Uterus (tissue), 4 donors: ENCODE measurements at regions of chr6 and their contacts with region 1.

Region 1: DNA sequence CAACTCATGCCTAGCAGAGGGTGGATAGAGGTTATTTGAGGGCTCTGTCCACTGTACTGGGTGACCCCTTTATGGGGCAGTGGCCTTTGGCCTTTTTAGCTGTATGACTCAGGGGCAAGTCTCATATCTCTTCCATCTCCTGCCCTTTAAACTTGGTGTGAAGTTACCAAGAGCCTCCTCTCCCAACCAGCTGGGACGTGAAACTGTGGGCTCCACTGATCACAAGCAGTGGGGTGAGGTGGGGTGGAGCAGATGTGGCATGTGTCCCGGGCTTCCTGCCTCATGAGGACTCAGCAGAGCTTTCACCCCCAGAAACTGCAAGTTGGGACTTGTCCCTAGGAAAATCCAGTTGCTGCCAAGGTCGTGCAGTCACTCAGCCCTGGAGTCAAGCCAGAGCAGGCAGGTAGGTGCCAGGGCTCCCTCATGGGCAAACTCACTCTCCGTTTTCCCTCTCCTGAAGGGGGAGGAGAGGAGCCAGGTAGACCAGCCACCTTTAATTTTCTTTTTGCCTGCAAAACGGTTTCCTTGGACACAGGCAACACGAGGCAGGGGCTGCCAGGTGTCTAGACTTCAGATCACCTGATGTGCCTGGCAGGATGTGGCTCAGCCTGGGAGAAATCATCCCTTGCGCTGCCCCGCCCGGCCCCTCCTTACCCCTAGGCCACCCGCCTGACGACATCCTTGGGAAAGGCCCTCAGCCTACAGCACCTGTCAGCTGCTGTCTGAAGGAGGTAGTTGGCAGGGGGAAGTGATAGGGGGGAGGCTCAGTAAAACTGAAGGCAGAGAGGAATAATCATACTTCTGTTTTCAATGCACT is 4.0 kb downstream of the CDKN1A start:
- DNase-seq: peak in 1 of 2 donors; percentile 34
- H3K4me3 ChIP-seq: no peak overlapping the region
- H3K27ac ChIP-seq: peak overlapping the region; percentile 1 to 28
- H3K4me1 ChIP-seq: peaks cover 0 to 5% of the 10 kb centered on the region in 2 donors
- H3K27me3 ChIP-seq: no peaks in the 10 kb centered on the region
- CTCF ChIP-seq: no peak
- POLR2A ChIP-seq: no peak

Region 2: DNA sequence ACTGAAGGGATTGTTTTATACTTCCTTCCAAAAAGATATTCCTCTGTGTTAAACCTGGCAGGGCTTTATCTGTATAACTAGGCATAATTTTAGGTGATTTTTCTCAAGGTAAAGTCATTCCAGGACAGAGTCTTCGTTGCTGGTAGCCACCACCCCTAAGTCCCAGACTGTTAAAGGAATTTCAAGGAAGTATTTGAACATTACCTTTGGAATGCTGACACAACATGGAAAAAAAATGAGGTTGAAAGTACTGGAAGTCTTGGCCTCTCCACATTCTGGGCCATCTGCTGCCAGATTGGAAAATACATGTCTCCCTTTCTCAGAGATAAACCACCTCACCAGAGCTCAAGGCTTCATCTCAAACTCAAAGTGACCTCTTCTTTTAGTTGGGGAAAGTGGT is 268.1 kb before region 1 on chr6:
- intact Hi-C with region 1: loop called (anchors 10 kb)
- DNase-seq: no peak
- H3K4me3 ChIP-seq: no peak overlapping the region
- H3K27ac ChIP-seq: no peak overlapping the region
- H3K4me1 ChIP-seq: no peaks in the 10 kb centered on the region
- H3K27me3 ChIP-seq: no peaks in the 10 kb centered on the region
- CTCF ChIP-seq: no peak
- POLR2A ChIP-seq: no peak

Region 3: GRCh38 chr6:36623547-36624459 is 58.7 kb before region 1 on chr6:
- intact Hi-C with region 1: loop called (anchors 5 kb)
- DNase-seq: peak; percentile 88 to 91
- H3K4me3 ChIP-seq: no peak overlapping the region
- H3K27ac ChIP-seq: peak overlapping the region; percentile 65 to 67
- H3K4me1 ChIP-seq: peaks cover 15 to 19% of the 10 kb centered on the region in 2 donors
- H3K27me3 ChIP-seq: no peaks in the 10 kb centered on the region
- CTCF ChIP-seq: peak; percentile 73 to 90 (median 82)
- POLR2A ChIP-seq: no peak